ENCODE measurements at regions of chrX and their contacts with region 1.

Region 1: GRCh38 chrX:31658360-31658759 is 586.5 kb upstream of the FTHL17 start:
- DNase-seq: no peak
- ATAC-seq: no peak

Region 2: DNA sequence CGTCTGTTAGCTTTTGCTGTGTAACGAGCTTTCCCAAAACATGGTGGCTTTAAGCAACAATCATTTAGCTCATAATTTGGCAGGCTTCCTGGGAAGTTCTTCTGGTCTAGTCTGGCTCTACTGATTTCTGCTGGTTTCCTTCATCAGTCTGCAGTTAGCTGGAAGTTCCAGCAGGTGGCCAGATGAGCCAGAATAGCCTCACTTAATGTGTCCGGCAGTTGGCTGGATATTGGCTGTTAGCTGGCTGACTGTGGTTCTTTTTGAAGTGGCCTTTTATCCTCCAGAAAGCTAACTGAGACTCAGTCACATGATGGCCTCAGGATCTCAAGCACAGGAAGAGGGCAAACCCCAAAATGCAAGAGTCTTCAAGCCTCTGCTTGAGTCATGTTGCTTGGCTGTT is 621.5 kb before region 1 on chrX:
- intact Hi-C with region 1: loop called (anchors 5 kb)
- DNase-seq: peak; percentile 34
- ATAC-seq: peak; percentile 73

Measured in Right ventricle myocardium superior (tissue), 1 donor.